Activated CD4-positive, alpha-beta T cell treated with anti-CD3 and anti-CD28 coated beads, Interleukin-2, amount 10 ng/mL, durations not matched to agents 24 days and 14 days (primary cell): ENCODE measurements at regions of chr14 and their contacts with region 1.

Region 1: GRCh38 chr14:70809543-70810244 is 381 bp upstream of the MAP3K9 start:
- DNase-seq: peak; percentile 96
- H3K4me3 Mint-ChIP-seq: no peak overlapping the region
- H3K27ac Mint-ChIP-seq: peak overlapping the region; percentile 79
- H3K4me1 Mint-ChIP-seq: peaks cover 7% of the 10 kb centered on the region
- H3K27me3 Mint-ChIP-seq: peaks cover 4% of the 10 kb centered on the region

Region 2: DNA sequence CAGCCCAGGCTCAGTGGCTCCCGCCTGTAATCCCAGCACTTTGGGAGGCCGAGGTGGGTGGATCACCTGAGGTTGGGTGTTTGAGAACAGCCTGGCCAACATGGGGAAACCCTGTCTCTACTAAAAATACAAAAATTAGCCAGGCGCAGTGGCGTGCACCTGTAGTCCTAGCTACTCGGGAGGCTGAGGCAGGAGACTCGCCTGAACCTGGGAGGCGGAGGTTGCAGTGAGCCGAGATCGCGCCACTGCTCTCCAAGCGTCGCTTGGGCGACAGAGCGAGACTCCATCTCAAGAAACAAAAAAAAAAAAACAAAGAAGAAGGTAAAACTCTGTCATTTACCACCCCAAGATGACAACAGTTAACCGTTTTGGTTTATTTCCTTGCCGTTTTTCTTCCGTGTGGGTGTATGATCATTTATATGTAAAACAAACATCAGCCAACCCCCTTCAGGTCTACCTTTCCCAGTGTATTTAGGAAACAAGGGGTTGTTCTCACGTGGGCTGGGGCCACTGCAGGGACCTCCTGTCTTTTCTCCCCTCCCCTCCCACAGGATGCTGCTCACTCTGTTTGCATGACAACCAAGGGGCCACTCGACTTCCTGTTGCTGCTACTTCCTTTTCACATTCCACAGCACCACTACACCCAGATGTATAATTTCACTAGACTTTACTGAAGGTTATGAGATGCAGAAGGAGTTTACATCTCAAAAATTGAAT is 154.4 kb before region 1 on chr14:
- intact Hi-C with region 1: loop called (anchors 5 kb)
- DNase-seq: peak; percentile 94
- H3K4me3 Mint-ChIP-seq: peak overlapping the region; percentile 85
- H3K27ac Mint-ChIP-seq: peak overlapping the region; percentile 98
- H3K4me1 Mint-ChIP-seq: peaks cover 73% of the 10 kb centered on the region
- H3K27me3 Mint-ChIP-seq: no peaks in the 10 kb centered on the region

Region 3: GRCh38 chr14:70754989-70755388 is 54.7 kb before region 1 on chr14:
- intact Hi-C with region 1: no loop called
- DNase-seq: no peak
- H3K4me3 Mint-ChIP-seq: no peak overlapping the region
- H3K27ac Mint-ChIP-seq: no peak overlapping the region
- H3K4me1 Mint-ChIP-seq: no peaks in the 10 kb centered on the region
- H3K27me3 Mint-ChIP-seq: no peaks in the 10 kb centered on the region

Region 4: GRCh38 chr14:70794294-70794693 is 15.4 kb before region 1 on chr14:
- intact Hi-C with region 1: no loop called
- DNase-seq: no peak
- H3K4me3 Mint-ChIP-seq: no peak overlapping the region
- H3K27ac Mint-ChIP-seq: no peak overlapping the region
- H3K4me1 Mint-ChIP-seq: no peaks in the 10 kb centered on the region
- H3K27me3 Mint-ChIP-seq: no peaks in the 10 kb centered on the region

Region 5: GRCh38 chr14:70842851-70843462 is 33.3 kb after region 1 on chr14:
- intact Hi-C with region 1: no loop called
- DNase-seq: no peak
- H3K4me3 Mint-ChIP-seq: no peak overlapping the region
- H3K27ac Mint-ChIP-seq: no peak overlapping the region
- H3K4me1 Mint-ChIP-seq: no peaks in the 10 kb centered on the region
- H3K27me3 Mint-ChIP-seq: peaks cover 14% of the 10 kb centered on the region